ENCODE measurements at regions of chr1 and their contacts with region 1.

Region 1: DNA sequence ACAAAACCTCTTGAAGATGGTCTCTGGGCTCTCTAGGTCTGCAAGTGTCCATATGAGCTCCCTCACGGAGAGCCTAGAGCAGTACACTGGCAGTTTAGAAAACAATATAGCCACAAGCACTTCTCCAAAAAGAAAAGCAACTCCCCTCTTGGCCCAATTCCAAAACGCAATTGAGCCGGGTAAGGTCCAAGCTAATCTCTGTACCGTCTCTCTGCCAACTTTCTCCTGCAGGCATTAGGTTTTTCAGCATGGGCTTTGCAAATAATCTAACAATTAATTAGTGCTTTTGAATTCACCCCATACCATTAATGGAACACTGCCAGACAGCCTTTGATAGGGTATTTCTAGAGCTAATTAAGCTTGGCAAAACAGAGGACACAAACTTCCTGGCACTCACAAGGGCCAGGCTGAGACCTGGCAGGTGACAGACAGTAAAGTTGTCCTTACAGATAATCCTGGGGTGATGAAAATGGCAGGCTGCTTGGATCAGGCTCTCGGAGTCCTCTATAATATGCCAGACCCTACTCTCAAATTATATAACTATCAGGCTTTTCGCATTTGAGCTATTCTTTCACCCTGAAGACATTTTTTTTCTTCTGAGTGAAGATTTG is 39.8 kb downstream of the TGFBR3 start:
- DNase-seq: no peak
- H3K4me3 ChIP-seq: no peak overlapping the region
- H3K27ac ChIP-seq: peak overlapping the region; percentile 76 to 81
- H3K4me1 ChIP-seq: peaks cover 9 to 27% of the 10 kb centered on the region in 2 donors
- H3K27me3 ChIP-seq: no peaks in the 10 kb centered on the region
- CTCF ChIP-seq: no peak

Region 2: GRCh38 chr1:91697416-91697815 is 148.7 kb before region 1 on chr1:
- intact Hi-C with region 1: no loop called
- DNase-seq: no peak
- H3K4me3 ChIP-seq: no peak overlapping the region
- H3K27ac ChIP-seq: peak overlapping the region in 1 of 2 donors; percentile 30
- H3K4me1 ChIP-seq: peaks cover 0 to 27% of the 10 kb centered on the region in 2 donors
- H3K27me3 ChIP-seq: no peaks in the 10 kb centered on the region
- CTCF ChIP-seq: no peak

Region 3: GRCh38 chr1:91732291-91733107 is 113.6 kb before region 1 on chr1:
- intact Hi-C with region 1: loop called (anchors 5 kb)
- DNase-seq: no peak
- H3K4me3 ChIP-seq: no peak overlapping the region
- H3K27ac ChIP-seq: peak overlapping the region in 1 of 2 donors; percentile 17
- H3K4me1 ChIP-seq: peaks cover 0 to 28% of the 10 kb centered on the region in 2 donors
- H3K27me3 ChIP-seq: no peaks in the 10 kb centered on the region
- CTCF ChIP-seq: no peak

Region 4: DNA sequence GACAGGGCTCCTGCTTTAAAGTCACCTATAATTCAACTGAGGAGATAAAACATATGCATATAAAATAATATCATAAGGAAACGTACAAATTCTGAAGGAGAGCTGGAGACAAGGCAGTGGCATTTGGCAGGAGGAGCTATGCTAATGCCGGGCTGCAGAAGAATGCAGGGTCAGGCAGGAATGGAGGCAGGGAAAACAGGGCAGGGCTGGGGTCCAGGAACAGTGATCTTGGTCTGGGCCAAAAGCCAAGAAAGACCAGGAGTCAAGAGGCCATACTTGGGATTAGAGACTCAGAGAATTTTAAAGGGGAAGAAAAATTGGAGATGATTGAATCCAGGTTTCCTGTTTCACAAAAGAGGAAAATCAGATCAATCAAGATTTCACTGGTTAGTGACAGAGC is 83.1 kb after region 1 on chr1:
- intact Hi-C with region 1: loop called (anchors 5 kb)
- DNase-seq: no peak
- H3K4me3 ChIP-seq: no peak overlapping the region
- H3K27ac ChIP-seq: no peak overlapping the region
- H3K4me1 ChIP-seq: no peaks in the 10 kb centered on the region
- H3K27me3 ChIP-seq: no peaks in the 10 kb centered on the region
- CTCF ChIP-seq: no peak